ENCODE measurements at regions of chr14 and their contacts with region 1.

Region 1: DNA sequence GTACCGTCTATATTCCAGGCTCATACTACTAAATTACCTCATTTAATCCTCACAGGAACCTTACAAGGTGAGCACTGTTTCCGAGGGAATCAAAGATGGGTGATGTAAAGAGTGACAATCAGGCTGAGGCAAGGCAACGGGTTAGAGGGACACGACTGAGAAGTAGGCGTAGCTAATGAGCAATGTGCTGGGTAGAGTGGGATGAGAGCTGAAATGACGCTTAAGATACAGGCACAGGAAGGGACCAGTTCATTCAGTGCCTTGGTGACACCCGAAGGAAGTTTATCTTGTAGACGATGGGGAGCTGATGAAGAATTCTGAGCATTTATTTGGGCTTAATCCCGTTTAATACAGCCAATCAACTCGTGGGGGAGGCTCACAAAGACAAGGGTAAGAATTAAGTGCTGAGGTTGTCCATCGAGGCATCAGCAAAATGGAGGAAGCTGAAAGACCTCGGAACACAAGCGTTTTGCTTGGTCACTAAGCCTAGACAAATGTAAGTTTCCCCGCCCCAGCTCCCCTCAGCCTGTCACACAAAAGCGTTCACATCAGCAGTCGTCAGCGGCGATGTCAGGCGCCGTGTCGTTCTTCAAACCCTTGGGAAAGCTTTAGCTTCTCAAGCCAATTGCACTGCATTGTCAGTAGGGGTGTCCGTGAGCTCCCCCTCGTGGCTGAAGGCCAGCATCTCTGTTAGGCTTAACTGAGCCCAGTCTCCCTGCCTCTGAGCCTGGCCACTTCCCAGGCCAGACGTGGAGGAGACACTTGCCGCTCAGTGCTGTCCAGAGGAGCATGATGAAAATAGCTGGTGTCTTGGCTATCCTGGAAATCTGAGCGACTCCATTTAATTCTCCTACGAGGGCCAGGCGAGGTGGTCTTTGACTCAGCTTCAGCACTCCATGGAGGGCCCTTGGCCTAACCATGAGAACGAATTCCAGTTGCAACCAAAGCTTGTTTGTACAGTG is 288.5 kb upstream of the G2E3 start:
- DNase-seq: peak; percentile 88
- ATAC-seq: peak; percentile 100
- H3K4me3 ChIP-seq: peak overlapping the region; percentile 30; the same call in 1 of the 2 replicates
- H3K27ac ChIP-seq: no peak overlapping the region
- H3K4me1 ChIP-seq: peaks cover 9% of the 10 kb centered on the region; the same call in 1 of the 2 replicates
- H3K27me3 ChIP-seq: peaks cover 29% of the 10 kb centered on the region
- CTCF ChIP-seq: peak; percentile 92

Region 2: GRCh38 chr14:29548948-29549370 is 721.5 kb before region 1 on chr14:
- CTCF ChIA-PET with region 1: no interaction called
- POLR2A ChIA-PET with region 1: no interaction called
- intact Hi-C with region 1: loop called (anchors 5 kb)
- DNase-seq: peak; percentile 77
- ATAC-seq: peak; percentile 89
- H3K4me3 ChIP-seq: no peak overlapping the region
- H3K27ac ChIP-seq: no peak overlapping the region
- H3K4me1 ChIP-seq: no peaks in the 10 kb centered on the region
- H3K27me3 ChIP-seq: peaks cover 7% of the 10 kb centered on the region; the same call in 1 of the 2 replicates
- CTCF ChIP-seq: peak; percentile 71

Region 3: GRCh38 chr14:29971101-29971500 is 299.4 kb before region 1 on chr14:
- CTCF ChIA-PET with region 1: no interaction called
- POLR2A ChIA-PET with region 1: no interaction called
- intact Hi-C with region 1: no loop called
- DNase-seq: no peak
- ATAC-seq: no peak
- H3K4me3 ChIP-seq: no peak overlapping the region
- H3K27ac ChIP-seq: no peak overlapping the region
- H3K4me1 ChIP-seq: no peaks in the 10 kb centered on the region
- H3K27me3 ChIP-seq: peaks cover 19% of the 10 kb centered on the region
- CTCF ChIP-seq: no peak

Region 4: GRCh38 chr14:30214461-30215090 is 55.9 kb before region 1 on chr14:
- CTCF ChIA-PET with region 1: interaction called, 13 read pairs
- POLR2A ChIA-PET with region 1: no interaction called
- intact Hi-C with region 1: no loop called
- DNase-seq: peak; percentile 74
- ATAC-seq: peak; percentile 79
- H3K4me3 ChIP-seq: no peak overlapping the region
- H3K27ac ChIP-seq: no peak overlapping the region
- H3K4me1 ChIP-seq: no peaks in the 10 kb centered on the region
- H3K27me3 ChIP-seq: no peaks in the 10 kb centered on the region
- CTCF ChIP-seq: peak; percentile 89

Region 5: DNA sequence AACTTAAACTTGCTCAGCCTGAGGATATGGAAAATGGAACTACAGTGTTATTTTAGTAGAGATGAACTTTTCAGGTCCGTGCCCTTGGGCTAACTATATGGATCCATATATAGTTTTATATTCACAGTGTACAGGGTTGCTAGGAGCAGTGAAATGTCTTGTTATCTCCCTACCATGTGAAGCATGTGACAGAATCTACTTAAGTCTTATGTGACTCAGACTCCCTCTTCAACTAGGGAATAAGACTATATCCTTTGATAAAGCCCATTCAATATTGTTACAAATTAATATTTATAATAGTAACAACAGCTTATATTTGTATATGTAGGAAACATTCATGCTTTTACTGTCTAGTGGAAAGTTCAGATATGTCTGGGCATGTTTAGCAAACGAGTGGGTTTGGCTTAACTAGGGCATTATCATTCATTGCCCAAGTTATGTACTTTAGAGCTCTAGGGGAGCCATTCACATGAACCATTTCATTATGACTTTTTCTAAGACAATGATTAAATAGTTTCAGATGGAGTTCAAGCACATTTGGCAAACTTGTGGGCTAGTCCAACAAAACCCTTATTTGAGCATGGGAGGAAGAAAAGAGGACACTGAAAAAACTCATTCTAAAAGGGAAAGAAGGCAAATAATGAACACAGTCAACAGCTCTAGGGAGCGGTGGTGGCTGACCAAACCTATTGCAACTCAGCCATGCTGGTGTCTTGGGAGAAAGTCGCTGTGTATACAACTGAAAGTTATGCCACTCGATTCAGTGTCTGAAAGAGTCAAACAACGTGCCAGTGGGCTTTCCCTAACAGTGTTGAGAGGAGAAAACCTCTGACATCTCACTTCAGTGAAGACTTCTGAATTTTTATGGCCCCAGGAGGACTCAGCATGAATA is 17.5 kb before region 1 on chr14:
- CTCF ChIA-PET with region 1: interaction called, 8 read pairs
- POLR2A ChIA-PET with region 1: no interaction called
- intact Hi-C with region 1: loop called (anchors 2 kb)
- DNase-seq: no peak
- ATAC-seq: no peak
- H3K4me3 ChIP-seq: no peak overlapping the region
- H3K27ac ChIP-seq: no peak overlapping the region
- H3K4me1 ChIP-seq: peaks cover 4% of the 10 kb centered on the region; the same call in 1 of the 2 replicates
- H3K27me3 ChIP-seq: no peaks in the 10 kb centered on the region
- CTCF ChIP-seq: no peak

Region 6: DNA sequence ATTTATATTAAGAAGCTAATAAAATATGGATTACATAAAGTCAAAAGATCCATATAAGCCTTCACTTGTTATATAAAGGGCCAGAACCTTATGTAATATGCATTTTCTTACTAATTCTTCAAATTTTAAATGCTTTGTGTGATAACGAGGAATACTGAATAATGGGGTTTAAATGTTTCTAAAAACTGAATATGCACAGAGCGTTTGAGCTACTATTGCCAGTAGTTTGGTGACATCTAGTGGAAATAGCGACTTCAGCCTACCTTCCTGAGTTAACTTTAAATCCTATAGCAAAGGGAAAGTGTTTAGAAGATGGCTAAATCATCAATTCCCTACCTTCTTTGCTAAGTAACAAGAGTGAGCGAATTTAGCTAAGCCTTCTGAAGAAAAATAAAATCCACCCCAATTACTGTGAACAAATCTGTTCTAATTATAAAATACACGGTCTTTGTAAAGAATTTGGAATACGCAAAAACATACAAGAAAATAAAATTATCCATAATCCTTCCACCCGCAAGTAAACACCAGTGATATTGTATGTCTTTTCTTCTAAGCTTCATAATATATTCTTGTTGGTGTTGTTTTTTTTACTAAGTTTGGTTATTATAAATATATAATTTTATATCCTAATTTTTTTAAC is 173.0 kb after region 1 on chr14:
- CTCF ChIA-PET with region 1: interaction called, 9 read pairs
- POLR2A ChIA-PET with region 1: no interaction called
- intact Hi-C with region 1: loop called (anchors 5 kb)
- DNase-seq: peak; percentile 73
- ATAC-seq: peak; percentile 67
- H3K4me3 ChIP-seq: no peak overlapping the region
- H3K27ac ChIP-seq: no peak overlapping the region
- H3K4me1 ChIP-seq: no peaks in the 10 kb centered on the region
- H3K27me3 ChIP-seq: peaks cover 44% of the 10 kb centered on the region
- CTCF ChIP-seq: peak; percentile 82